Aorta (tissue), 5 donors: ENCODE measurements at regions of chr18 and their contacts with region 1.

Region 1: DNA sequence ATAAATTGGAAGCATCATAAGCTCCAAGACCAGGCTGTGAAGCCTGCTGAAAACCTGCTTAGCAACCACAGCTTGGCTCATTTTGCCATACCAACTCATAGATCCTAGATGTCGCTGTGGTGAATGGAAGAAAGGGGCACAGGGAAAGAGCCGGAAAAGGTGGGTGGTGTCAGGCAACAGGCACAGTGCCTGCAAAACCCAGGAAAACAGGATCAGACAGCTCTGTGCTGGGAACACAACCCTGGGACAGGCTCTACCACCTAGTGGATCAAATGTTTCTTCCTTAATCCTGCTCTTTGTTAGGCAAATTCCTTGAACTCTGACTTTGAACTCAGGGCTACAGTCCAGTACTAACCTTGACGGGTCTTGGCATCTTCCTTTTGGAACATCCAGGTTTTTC is 31.6 kb downstream of the TWSG1 start:
- DNase-seq: peak in 1 of 2 donors; percentile 51
- ATAC-seq: peak; percentile 73
- H3K4me3 ChIP-seq: no peak overlapping the region
- H3K27ac ChIP-seq: peak overlapping the region in 1 of 2 donors; percentile 75
- H3K4me1 ChIP-seq: peaks cover 0 to 7% of the 10 kb centered on the region in 2 donors
- H3K27me3 ChIP-seq: no peaks in the 10 kb centered on the region

Region 2: DNA sequence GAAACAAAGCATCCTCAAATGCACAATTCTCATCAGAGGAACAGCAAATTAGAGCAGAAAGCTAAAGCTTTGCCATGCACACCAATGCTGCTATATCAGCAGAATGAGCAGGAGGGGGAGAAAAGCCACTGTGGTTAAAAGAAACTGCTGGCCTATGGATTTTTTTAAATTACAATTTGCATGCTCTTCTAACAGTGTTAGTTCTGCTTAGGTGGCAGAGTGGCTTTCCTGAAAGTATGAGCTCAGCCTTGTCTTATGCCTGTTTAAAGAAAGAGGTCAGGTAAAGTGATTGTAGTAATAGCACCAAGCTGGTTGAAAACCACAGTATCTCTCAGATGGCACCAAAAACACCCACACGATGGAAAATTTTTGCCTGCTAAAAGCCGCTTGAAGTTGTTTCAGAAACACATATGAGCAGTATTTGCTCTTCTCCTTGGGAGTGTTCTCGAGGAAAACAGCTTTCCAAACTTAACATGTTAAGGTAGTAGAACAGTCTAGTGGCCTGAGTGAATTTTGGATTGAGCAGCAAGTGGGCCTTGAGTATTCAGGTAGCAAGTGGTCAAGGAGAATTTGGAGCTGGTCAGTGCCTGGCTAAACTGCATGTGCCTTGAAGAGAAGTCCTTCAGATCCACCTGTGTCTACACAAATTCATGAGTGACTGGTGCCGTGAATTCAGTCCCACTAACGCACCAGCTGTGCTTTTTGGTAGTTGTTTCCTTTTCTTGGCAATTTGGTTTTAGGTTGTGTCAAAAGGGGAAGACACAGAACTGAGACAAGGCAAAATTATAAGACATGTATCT is 283.3 kb before region 1 on chr18:
- intact Hi-C with region 1: no loop called
- DNase-seq: no peak
- ATAC-seq: no peak
- H3K4me3 ChIP-seq: no peak overlapping the region
- H3K27ac ChIP-seq: no peak overlapping the region
- H3K4me1 ChIP-seq: no peaks in the 10 kb centered on the region
- H3K27me3 ChIP-seq: no peaks in the 10 kb centered on the region

Region 3: GRCh38 chr18:9249254-9249653 is 116.9 kb before region 1 on chr18:
- intact Hi-C with region 1: no loop called
- DNase-seq: no peak
- ATAC-seq: no peak
- H3K4me3 ChIP-seq: no peak overlapping the region
- H3K27ac ChIP-seq: no peak overlapping the region
- H3K4me1 ChIP-seq: no peaks in the 10 kb centered on the region
- H3K27me3 ChIP-seq: no peaks in the 10 kb centered on the region

Region 4: DNA sequence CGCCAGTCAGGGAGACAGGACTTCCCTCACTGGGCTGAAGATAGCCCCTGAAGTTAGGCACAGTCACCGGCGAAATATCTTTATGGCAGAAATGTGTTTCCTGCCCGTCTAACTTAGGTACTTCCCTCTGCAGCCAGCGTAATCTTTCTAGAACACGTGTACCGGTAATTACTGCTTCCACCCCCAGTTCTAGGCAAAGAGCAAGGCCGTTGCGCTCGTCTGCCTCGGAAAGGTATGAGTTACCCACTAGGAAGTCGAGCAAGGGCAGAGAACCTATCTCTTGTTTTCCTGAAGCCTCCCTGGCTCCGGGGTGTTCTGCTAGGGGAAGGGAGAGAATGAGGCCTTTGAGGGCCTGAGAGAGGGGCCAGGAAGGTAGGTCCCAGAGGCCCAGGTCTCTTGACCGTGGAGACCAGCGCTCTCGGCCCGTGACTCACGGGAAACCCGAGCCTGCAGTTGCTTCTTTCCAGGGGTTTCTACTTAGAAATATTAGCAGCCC is 38.4 kb after region 1 on chr18:
- intact Hi-C with region 1: no loop called
- DNase-seq: no peak
- ATAC-seq: peak; percentile 79
- H3K4me3 ChIP-seq: no peak overlapping the region
- H3K27ac ChIP-seq: no peak overlapping the region
- H3K4me1 ChIP-seq: no peaks in the 10 kb centered on the region
- H3K27me3 ChIP-seq: no peaks in the 10 kb centered on the region

Region 5: GRCh38 chr18:9474983-9475642 is 108.9 kb after region 1 on chr18 and contains the start of gene RALBP1:
- intact Hi-C with region 1: loop called in 1 of 2 experiments (anchors 10 kb)
- DNase-seq: peak; percentile 100
- ATAC-seq: peak; percentile 100
- H3K4me3 ChIP-seq: peak within 1 kb of the TSS; percentile 61 to 91
- H3K27ac ChIP-seq: peak within 1 kb of the TSS in 1 of 2 donors; percentile 96
- H3K4me1 ChIP-seq: peaks cover 0 to 2% of the 10 kb centered on the region in 2 donors
- H3K27me3 ChIP-seq: no peaks in the 10 kb centered on the region
- total RNA-seq, gene RALBP1: 52.6 to 55.3 TPM

Region 6: DNA sequence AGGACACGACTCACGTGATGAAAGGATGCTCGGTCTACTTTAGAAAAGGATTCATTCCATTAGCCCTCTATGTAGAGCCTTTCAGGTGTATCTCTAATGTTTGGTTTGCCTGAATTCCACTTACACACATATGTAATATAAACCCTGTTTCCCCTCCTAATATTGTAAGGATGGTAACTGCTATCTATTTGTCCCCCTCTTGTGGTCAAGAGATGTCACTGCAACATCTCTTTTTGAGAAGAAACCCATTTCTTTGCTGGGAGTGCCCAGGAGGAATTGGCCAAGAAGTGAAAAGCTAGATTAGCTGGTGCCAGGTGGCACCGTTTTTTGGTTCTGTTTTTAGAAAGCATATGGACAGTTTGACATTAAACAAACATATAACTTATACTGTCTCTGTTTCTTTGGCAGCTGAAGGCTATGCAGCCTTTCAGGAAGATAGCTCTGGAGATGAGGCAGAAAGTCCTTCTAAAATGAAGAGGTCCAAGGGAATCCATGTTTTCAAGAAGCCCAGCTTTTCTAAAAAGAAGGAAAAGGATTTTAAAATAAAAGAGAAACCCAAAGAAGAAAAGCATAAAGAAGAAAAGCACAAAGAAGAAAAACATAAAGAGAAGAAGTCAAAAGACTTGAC is 150.4 kb after region 1 on chr18:
- intact Hi-C with region 1: loop called in 1 of 2 experiments (anchors 10 kb)
- DNase-seq: no peak
- ATAC-seq: peak; percentile 78
- H3K4me3 ChIP-seq: no peak overlapping the region
- H3K27ac ChIP-seq: no peak overlapping the region
- H3K4me1 ChIP-seq: no peaks in the 10 kb centered on the region
- H3K27me3 ChIP-seq: no peaks in the 10 kb centered on the region

Region 7: DNA sequence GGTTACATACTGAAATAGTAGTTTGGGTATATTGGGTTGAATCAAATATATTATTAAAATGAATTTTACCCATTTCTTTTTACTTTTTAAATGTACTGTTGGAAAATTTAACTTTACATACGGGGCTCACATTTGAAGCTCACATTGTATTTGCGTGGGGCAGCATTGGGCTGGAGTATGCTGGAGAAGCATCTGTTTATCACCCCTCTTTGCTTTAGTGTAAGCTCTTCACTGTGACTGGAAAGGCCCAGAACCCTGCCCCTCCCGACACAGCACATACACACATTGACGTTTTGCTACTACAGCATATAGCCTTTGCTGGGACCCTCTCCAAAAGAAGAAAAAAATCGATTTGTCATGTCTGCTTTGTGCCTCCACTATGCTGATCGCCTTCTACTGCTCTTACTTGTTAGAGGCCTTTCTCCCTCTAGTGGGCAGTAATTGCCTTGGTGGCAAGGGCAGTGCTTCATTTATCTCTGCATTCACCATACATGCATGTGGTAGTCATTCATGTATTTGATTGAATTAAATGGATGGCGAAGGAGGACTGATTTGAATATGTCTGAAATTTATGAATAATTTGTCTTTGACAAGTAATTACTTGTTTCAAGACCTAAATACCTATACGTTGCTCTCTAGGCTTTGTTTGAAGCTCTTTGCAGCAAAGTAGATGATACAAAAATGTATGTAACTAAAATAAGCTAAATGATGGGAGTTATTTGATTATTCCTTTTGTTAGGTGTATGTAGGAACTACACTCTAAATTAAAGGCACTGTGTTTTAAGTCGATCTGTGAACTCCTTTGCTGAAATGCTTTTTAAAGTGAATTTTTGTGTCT is 585.0 kb after region 1 on chr18:
- intact Hi-C with region 1: no loop called
- DNase-seq: no peak
- ATAC-seq: peak; percentile 78
- H3K4me3 ChIP-seq: no peak overlapping the region
- H3K27ac ChIP-seq: no peak overlapping the region
- H3K4me1 ChIP-seq: no peaks in the 10 kb centered on the region
- H3K27me3 ChIP-seq: no peaks in the 10 kb centered on the region